ENCODE measurements at regions of chr11 and their contacts with region 1.

Region 1: DNA sequence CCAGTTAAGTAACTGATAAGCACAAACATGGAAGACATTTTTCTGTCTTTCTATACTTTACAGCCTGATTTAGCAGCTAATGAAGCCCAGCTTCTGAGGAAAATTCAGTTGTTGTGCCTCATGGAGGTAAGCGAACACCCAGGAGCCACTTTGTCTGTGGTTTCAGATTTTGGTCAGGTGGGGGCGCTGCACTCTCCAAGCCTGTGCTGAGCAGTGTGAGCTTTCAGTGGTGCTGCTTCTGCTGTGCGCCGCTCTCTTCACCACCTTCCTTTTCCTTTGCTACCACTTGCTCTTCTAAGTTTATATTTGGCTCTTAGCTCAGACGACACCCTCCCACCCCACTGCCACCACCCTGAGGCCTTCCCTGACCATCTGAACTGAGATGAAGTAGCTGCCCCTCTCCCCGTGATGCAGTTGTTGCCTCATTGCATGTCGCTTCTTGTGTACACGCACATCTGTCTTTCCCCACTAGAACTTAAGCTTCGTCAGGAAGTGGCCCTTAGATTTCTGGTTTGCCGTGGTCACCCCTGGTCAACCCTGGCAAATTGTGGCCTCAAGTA is 14.0 kb downstream of the PSMD13 start:
- DNase-seq: peak; percentile 89
- ATAC-seq: peak; percentile 98
- H3K4me3 Mint-ChIP-seq: no peak overlapping the region
- H3K27ac Mint-ChIP-seq: peak overlapping the region; percentile 93; the same call in 1 of the 2 replicates
- H3K4me1 Mint-ChIP-seq: peaks cover 6% of the 10 kb centered on the region; the same call in 1 of the 2 replicates
- H3K27me3 Mint-ChIP-seq: no peaks in the 10 kb centered on the region
- CTCF ChIP-seq: peak; percentile 92

Region 2: GRCh38 chr11:227824-228379 is 22.9 kb before region 1 on chr11:
- CTCF ChIA-PET with region 1: interaction called, 21 read pairs
- POLR2A ChIA-PET with region 1: no interaction called
- DNase-seq: no peak
- ATAC-seq: no peak
- H3K4me3 Mint-ChIP-seq: no peak overlapping the region
- H3K27ac Mint-ChIP-seq: no peak overlapping the region
- H3K4me1 Mint-ChIP-seq: no peaks in the 10 kb centered on the region
- H3K27me3 Mint-ChIP-seq: no peaks in the 10 kb centered on the region
- CTCF ChIP-seq: no peak

Region 3: DNA sequence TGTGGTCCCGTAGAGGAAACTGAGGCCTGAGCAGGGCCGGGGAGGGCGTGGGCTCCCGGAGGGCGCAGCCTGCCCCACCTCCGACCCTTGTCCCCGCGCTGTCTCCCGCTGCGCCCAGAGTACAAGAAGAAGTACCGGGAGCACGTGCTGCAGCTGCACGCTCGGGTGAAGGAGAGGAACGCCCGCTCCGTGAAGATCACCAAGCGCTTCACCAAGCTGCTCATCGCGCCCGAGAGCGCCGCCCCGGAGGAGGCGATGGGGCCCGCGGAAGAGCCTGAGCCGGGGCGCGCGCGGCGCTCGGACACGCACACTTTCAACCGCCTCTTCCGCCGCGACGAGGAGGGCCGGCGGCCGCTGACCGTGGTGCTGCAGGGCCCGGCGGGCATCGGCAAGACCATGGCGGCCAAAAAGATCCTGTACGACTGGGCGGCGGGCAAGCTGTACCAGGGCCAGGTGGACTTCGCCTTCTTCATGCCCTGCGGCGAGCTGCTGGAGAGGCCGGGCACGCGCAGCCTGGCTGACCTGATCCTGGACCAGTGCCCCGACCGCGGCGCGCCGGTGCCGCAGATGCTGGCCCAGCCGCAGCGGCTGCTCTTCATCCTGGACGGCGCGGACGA is 29.3 kb after region 1 on chr11:
- CTCF ChIA-PET with region 1: interaction called, 53 read pairs
- POLR2A ChIA-PET with region 1: no interaction called
- DNase-seq: peak; percentile 46
- ATAC-seq: peak; percentile 26
- H3K4me3 Mint-ChIP-seq: peak overlapping the region; percentile 40; the same call in 1 of the 2 replicates
- H3K27ac Mint-ChIP-seq: no peak overlapping the region
- H3K4me1 Mint-ChIP-seq: peaks cover 35% of the 10 kb centered on the region
- H3K27me3 Mint-ChIP-seq: peaks cover 50% of the 10 kb centered on the region
- CTCF ChIP-seq: no peak

Region 4: DNA sequence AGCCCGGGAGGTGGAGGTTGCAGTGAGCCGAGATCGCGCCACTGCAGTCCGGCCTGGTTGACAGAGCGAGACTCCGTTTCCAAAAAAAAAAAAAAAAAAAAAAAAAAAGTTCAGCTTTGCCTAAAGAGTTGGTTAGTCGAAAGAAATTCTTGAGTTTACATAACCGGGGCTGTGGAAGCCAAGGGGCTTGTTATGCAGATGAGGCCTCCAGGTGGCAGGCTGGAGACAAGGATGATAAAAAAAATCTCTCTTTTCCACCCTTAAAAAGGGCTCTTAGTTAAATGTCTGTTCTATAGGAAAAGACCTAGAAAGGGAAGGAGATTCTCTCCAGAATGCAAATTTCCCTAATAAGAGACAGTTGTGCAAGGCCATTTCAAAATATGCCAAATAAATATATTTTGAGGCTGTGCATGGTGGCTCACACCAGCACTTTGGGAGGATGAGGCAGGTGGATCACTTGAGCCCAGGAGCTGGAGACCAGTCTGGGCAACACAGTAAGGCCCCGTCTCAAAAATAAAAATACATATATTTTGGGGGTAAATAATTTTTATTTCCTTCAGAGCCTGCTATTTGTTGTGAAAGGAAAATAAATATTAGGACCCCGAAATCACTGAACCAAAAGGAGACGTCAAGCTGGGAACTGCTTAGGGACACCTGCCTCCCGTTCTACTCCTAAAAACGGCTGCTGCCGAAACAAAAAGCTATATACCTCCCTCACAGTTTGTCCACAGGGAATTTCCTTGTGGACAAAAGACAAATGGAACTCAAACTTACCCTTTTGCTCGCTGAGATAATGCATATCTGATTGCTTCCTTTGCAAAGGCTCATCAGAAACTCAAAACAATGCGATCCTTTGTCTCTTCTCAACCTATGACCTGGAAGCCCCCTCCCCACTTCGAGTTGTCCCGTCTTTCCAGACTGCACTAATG is 54.4 kb after region 1 on chr11:
- CTCF ChIA-PET with region 1: interaction called, 36 read pairs
- POLR2A ChIA-PET with region 1: interaction called, 4 read pairs
- DNase-seq: peak; percentile 73
- ATAC-seq: peak; percentile 34
- H3K4me3 Mint-ChIP-seq: peak overlapping the region; percentile 43
- H3K27ac Mint-ChIP-seq: peak overlapping the region; percentile 99
- H3K4me1 Mint-ChIP-seq: peaks cover 83% of the 10 kb centered on the region
- H3K27me3 Mint-ChIP-seq: no peaks in the 10 kb centered on the region
- CTCF ChIP-seq: peak; percentile 34

Region 5: DNA sequence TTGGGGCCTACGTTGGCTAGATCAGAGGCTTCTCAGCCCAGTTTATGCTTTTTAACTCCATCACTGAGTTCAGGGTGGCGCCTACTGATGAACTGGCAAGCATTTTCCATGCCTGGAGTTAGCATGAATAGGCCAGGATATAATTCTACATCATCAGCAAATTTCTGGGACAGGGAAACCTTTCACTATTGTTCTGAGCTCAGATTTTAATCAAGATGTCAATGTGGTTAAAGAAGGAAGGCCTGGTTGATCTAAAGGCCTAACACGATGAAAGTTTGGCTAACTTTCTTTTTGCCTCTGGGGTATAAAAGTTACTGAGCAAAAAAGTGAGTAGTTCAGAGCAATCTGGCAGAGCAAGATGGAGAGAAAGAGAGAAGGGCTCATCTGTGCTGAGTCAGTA is 91.5 kb after region 1 on chr11:
- CTCF ChIA-PET with region 1: interaction called, 20 read pairs
- POLR2A ChIA-PET with region 1: no interaction called
- DNase-seq: no peak
- ATAC-seq: no peak
- H3K4me3 Mint-ChIP-seq: no peak overlapping the region
- H3K27ac Mint-ChIP-seq: 0 out of 2 replicates have a peak overlapping the region, but pooled peaks have one; percentile 39
- H3K4me1 Mint-ChIP-seq: peaks cover 32% of the 10 kb centered on the region
- H3K27me3 Mint-ChIP-seq: no peaks in the 10 kb centered on the region
- CTCF ChIP-seq: no peak

Region 6: DNA sequence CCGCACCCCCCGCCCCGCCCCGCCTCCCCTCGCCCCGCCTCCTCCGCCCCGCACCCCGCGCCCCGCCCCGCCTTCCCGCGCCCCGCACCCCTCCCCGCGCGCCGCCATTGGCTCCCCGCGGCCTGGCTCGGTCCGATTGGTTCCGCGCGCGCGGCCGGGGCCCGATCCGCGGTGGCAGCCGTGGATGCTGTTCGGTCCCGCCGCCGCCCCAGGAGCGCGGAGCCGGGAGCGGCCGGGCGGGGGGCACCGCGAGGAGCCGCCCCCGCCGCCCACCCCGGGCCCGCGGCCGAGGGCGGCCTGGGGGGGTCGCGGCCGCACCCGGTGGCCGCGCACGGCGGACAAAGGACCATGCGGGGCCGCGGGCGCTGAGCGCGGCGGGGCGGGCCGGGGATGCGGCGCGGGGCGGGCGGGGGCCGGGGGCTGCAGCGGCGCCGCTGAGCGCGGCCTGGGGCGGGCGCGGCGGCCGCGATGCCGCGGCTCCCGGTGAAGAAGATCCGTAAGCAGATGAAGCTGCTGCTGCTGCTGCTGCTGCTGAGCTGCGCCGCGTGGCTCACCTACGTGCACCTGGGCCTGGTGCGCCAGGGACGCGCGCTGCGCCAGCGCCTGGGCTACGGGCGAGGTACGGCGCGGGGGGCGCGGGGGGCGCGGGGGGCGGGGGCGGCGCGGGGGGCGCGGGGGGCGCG is 118.7 kb after region 1 on chr11 and contains the start of gene B4GALNT4:
- CTCF ChIA-PET with region 1: interaction called, 96 read pairs
- POLR2A ChIA-PET with region 1: no interaction called
- DNase-seq: peak; percentile 40
- ATAC-seq: peak; percentile 3; the same call in 1 of the 2 replicates
- H3K4me3 Mint-ChIP-seq: peak within 1 kb of the TSS; percentile 88
- H3K27ac Mint-ChIP-seq: peak within 1 kb of the TSS; percentile 87
- H3K4me1 Mint-ChIP-seq: peaks cover 24% of the 10 kb centered on the region
- H3K27me3 Mint-ChIP-seq: peaks cover 8% of the 10 kb centered on the region
- CTCF ChIP-seq: no peak
- total RNA-seq, gene B4GALNT4: 88.0 to 113 TPM (median 97.8 TPM) in 3 replicates

Region 7: GRCh38 chr11:424232-424631 is 173.4 kb after region 1 on chr11:
- CTCF ChIA-PET with region 1: no interaction called
- POLR2A ChIA-PET with region 1: no interaction called
- DNase-seq: no peak
- ATAC-seq: no peak
- H3K4me3 Mint-ChIP-seq: no peak overlapping the region
- H3K27ac Mint-ChIP-seq: no peak overlapping the region
- H3K4me1 Mint-ChIP-seq: no peaks in the 10 kb centered on the region
- H3K27me3 Mint-ChIP-seq: peaks cover 12% of the 10 kb centered on the region
- CTCF ChIP-seq: no peak

Region 8: GRCh38 chr11:706957-707816 is 456.4 kb after region 1 on chr11:
- CTCF ChIA-PET with region 1: no interaction called
- POLR2A ChIA-PET with region 1: no interaction called
- DNase-seq: peak; percentile 47
- ATAC-seq: peak; percentile 46
- H3K4me3 Mint-ChIP-seq: peak overlapping the region; percentile 62
- H3K27ac Mint-ChIP-seq: no peak overlapping the region
- H3K4me1 Mint-ChIP-seq: peaks cover 30% of the 10 kb centered on the region
- H3K27me3 Mint-ChIP-seq: no peaks in the 10 kb centered on the region
- CTCF ChIP-seq: 0 out of 2 replicates have a peak, but pooled peaks have one; percentile 13

Measured in WTC11 (cell line).